ENCODE measurements at regions of chr11 and their contacts with region 1.

Region 1: DNA sequence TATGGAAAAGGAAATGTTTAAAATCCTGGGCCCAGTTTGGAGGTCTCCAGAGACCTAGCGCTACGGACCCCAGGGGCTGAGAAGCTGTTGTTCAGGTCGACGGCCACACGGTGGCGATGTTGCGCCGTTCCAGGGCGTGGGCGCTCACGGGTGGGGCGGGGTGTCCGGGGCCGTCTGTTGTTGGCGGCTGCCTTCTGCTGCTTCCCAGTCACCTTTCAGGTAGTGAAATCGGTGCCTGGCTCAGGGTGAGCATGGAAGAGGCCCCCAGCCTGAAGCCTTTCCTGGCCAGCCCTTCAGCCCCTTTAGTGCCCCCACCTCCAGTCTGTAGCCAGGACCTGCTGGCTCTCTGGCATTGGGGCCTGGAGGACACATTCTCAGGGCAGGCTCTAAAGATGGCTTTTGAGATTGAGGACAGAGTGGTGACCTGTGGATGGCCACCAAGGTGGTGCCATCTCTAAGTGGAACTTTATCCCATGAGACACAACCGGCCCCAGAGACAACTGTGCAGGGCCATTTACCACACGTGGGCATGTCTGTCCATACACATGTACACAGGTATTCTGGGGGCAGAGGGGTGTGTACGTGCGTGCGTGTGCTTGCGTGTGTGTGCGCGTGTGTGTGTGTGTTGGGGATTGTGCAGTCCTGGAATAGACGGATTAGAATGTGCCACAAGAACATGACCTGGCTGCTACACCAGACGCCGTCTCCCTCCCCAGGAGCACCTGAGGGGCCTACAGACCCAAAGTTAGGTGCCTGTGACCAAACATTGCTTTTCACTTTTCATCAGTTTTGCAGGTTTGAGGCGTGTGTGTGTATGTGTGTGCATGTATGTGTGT is 53.8 kb downstream of the ST14 start:
- DNase-seq: peak; percentile 94
- H3K4me3 ChIP-seq: peak overlapping the region; percentile 9 to 30; a peak in 2 of 4 replicates
- H3K27ac ChIP-seq: no peak overlapping the region
- H3K4me1 ChIP-seq: peaks cover 0 to 7% of the 10 kb centered on the region in 2 experiments; a peak in 1 of 4 replicates
- H3K27me3 ChIP-seq: peaks cover 20% of the 10 kb centered on the region
- CTCF ChIP-seq: peak; percentile 94
- EP300 ChIP-seq: no peak
- RAD21 ChIP-seq: peak; percentile 87

Region 2: GRCh38 chr11:130202009-130202817 is 11.1 kb before region 1 on chr11:
- CTCF ChIA-PET with region 1: interaction called, 27 read pairs
- POLR2A ChIA-PET with region 1: no interaction called
- DNase-seq: no peak
- H3K4me3 ChIP-seq: no peak overlapping the region
- H3K27ac ChIP-seq: no peak overlapping the region
- H3K4me1 ChIP-seq: no peaks in the 10 kb centered on the region
- H3K27me3 ChIP-seq: peaks cover 21% of the 10 kb centered on the region; the same call in 1 of the 2 replicates
- CTCF ChIP-seq: no peak
- EP300 ChIP-seq: no peak
- RAD21 ChIP-seq: no peak

Region 3: GRCh38 chr11:130223291-130223971 is 10.1 kb after region 1 on chr11:
- CTCF ChIA-PET with region 1: interaction called, 13 read pairs
- POLR2A ChIA-PET with region 1: no interaction called
- DNase-seq: no peak
- H3K4me3 ChIP-seq: no peak overlapping the region
- H3K27ac ChIP-seq: no peak overlapping the region
- H3K4me1 ChIP-seq: no peaks in the 10 kb centered on the region
- H3K27me3 ChIP-seq: no peaks in the 10 kb centered on the region
- CTCF ChIP-seq: no peak
- EP300 ChIP-seq: no peak
- RAD21 ChIP-seq: no peak